ENCODE measurements at regions of chr5 and their contacts with region 1.

Region 1: DNA sequence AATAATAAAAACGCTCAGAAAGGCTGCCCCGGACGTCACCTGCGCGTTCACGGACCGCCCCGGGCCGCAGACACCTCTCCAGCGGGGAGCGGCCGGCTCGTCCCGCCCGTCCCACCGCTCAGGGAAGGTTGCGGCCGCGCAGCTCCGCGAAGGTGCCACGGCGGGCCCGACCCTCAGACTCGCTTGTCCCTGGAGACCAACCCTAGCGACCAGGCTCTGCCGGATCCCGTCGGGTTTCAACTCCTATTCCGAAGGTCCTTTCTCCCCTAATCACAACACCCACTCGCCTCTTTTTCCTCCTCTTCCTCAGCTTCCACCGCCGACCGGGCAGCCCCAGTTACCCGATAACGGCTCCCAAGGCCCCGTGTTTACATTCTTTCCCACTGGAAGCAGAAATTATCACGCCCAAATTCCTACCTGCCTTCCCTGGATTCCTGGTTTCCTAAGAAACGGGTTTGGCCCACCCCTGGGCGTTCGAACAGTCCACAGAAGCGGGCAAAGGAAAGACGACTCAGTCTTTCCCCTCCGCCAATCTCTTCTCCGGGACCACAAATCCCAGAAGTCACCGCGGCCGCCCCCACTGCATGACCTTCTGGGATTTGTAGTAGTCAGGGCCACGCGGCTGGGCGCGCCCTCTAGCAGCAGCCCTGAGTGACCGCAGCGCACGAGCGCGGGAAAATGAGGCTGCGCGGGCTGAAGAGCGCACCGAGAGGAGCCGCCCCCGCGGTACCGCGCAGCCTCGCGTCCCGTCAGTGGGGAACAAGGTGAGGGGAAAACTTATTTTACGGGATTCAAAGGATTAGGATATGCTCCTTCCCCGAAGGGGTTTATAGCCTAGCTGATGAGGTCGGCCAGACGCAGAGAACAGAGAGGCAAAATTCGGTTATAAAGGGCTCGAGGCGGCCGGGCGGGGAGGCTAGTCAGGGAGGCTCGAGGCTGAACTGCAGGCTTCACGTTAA is at the start of gene TTC33:
- DNase-seq: peak; percentile 84 to 95 (median 91)
- ATAC-seq: peak; percentile 95
- H3K4me3 ChIP-seq: peak within 1 kb of the TSS; percentile 95
- H3K4me3 Mint-ChIP-seq: no peak within 1 kb of the TSS
- H3K27ac ChIP-seq: peak within 1 kb of the TSS; percentile 89
- H3K27ac Mint-ChIP-seq: peak within 1 kb of the TSS in 1 of 9 donors; percentile 32
- H3K4me1 ChIP-seq: peaks cover 9 to 11% of the 10 kb centered on the region in 2 donors
- H3K4me1 Mint-ChIP-seq: peaks cover 0 to 34% (median 17%) of the 10 kb centered on the region in 7 donors
- H3K27me3 ChIP-seq: no peaks in the 10 kb centered on the region
- H3K27me3 Mint-ChIP-seq: no peaks in the 10 kb centered on the region
- total RNA-seq, gene TTC33: 7.0 to 17.2 (median 14.0) TPM

Region 2: GRCh38 chr5:39578887-39579497 is 1176.7 kb before region 1 on chr5:
- CTCF ChIA-PET with region 1: no interaction called
- POLR2A ChIA-PET with region 1: no interaction called
- intact Hi-C with region 1: loop called in 1 of 2 experiments (anchors 5 kb)
- DNase-seq: peak in 6 of 9 donors; percentile 2 to 31 (median 18)
- ATAC-seq: no peak
- H3K4me3 ChIP-seq: no peak overlapping the region
- H3K4me3 Mint-ChIP-seq: no peak overlapping the region
- H3K27ac ChIP-seq: no peak overlapping the region
- H3K27ac Mint-ChIP-seq: no peak overlapping the region
- H3K4me1 ChIP-seq: peaks cover 0 to 9% of the 10 kb centered on the region in 2 donors
- H3K4me1 Mint-ChIP-seq: peaks cover 6 to 17% (median 8%) of the 10 kb centered on the region in 7 donors
- H3K27me3 ChIP-seq: no peaks in the 10 kb centered on the region
- H3K27me3 Mint-ChIP-seq: peaks cover 0 to 23% (median 0%) of the 10 kb centered on the region in 5 donors

Region 3: DNA sequence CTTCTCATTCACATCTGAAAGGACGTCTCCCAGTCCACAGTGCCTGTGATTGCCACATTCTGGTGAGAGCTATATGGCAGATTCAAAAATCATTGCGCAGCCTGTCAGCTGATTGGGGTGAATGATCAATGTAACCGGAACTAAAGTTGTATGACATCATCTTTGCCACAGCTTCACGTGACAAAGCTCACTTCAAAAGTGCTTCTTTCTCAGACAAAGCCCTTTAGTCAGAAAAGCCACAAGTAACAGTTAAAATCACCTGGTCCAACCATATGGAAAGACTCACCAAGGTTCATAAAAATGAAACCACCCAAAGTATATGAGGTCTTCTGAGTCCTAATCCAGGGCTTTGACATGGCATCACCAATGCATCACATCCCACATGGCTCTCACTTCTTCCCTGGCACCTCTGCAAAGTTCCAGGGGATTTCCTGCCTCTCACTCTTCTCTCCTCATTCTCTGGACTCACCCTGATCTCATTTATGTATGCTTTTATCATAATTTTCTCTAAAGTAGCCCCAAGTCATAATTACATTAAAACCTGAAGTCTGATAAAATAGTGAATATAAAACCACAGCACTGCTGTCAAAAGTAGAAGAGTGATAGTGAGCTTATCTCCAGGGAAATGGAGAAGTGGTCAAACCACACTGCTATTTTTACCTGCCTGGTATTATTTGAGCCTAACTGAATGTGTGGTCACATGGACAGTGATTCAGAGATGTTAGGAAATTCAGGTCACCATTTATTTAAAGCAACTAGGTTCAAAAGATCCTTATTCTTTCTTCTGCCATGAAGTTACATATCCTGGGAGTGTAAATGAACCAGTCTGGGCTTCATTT is 269.0 kb before region 1 on chr5:
- CTCF ChIA-PET with region 1: no interaction called
- POLR2A ChIA-PET with region 1: no interaction called
- intact Hi-C with region 1: loop called in 1 of 2 experiments (anchors 10 kb)
- DNase-seq: peak in 8 of 9 donors; percentile 31 to 76 (median 56)
- ATAC-seq: peak; percentile 81
- H3K4me3 ChIP-seq: no peak overlapping the region
- H3K4me3 Mint-ChIP-seq: peak overlapping the region in 4 of 10 donors; percentile 2 to 52 (median 48)
- H3K27ac ChIP-seq: no peak overlapping the region
- H3K27ac Mint-ChIP-seq: peak overlapping the region in 8 of 9 donors; percentile 5 to 87 (median 59)
- H3K4me1 ChIP-seq: peaks cover 6 to 12% of the 10 kb centered on the region in 2 donors
- H3K4me1 Mint-ChIP-seq: peaks cover 6 to 69% (median 30%) of the 10 kb centered on the region in 7 donors
- H3K27me3 ChIP-seq: no peaks in the 10 kb centered on the region
- H3K27me3 Mint-ChIP-seq: no peaks in the 10 kb centered on the region

Region 4: GRCh38 chr5:40798012-40798855 is 42.5 kb after region 1 on chr5 and contains the start of gene PRKAA1:
- CTCF ChIA-PET with region 1: interaction called, 3 read pairs
- POLR2A ChIA-PET with region 1: no interaction called
- intact Hi-C with region 1: loop called (anchors 1 kb)
- DNase-seq: peak; percentile 86 to 92 (median 91)
- ATAC-seq: peak; percentile 98
- H3K4me3 ChIP-seq: peak within 1 kb of the TSS; percentile 98
- H3K4me3 Mint-ChIP-seq: peak within 1 kb of the TSS; percentile 86 to 96 (median 94)
- H3K27ac ChIP-seq: peak within 1 kb of the TSS; percentile 91
- H3K27ac Mint-ChIP-seq: peak within 1 kb of the TSS; percentile 74 to 96 (median 94)
- H3K4me1 ChIP-seq: peaks cover 12 to 16% of the 10 kb centered on the region in 2 donors
- H3K4me1 Mint-ChIP-seq: peaks cover 28 to 55% (median 44%) of the 10 kb centered on the region in 7 donors
- H3K27me3 ChIP-seq: no peaks in the 10 kb centered on the region
- H3K27me3 Mint-ChIP-seq: peaks cover 0 to 17% (median 0%) of the 10 kb centered on the region in 5 donors
- total RNA-seq, gene PRKAA1: 65.5 to 103 (median 98.1) TPM

Region 5: GRCh38 chr5:40879163-40879942 is 123.7 kb after region 1 on chr5:
- CTCF ChIA-PET with region 1: no interaction called
- POLR2A ChIA-PET with region 1: no interaction called
- intact Hi-C with region 1: loop called (anchors 1 kb)
- DNase-seq: peak in 5 of 9 donors; percentile 23 to 39 (median 29)
- ATAC-seq: peak; percentile 45
- H3K4me3 ChIP-seq: no peak overlapping the region
- H3K4me3 Mint-ChIP-seq: no peak overlapping the region
- H3K27ac ChIP-seq: no peak overlapping the region
- H3K27ac Mint-ChIP-seq: no peak overlapping the region
- H3K4me1 ChIP-seq: no peaks in the 10 kb centered on the region
- H3K4me1 Mint-ChIP-seq: peaks cover 0 to 5% (median 0%) of the 10 kb centered on the region in 7 donors
- H3K27me3 ChIP-seq: no peaks in the 10 kb centered on the region
- H3K27me3 Mint-ChIP-seq: peaks cover 0 to 9% (median 0%) of the 10 kb centered on the region in 5 donors

Measured in naive thymus-derived CD4-positive, alpha-beta T cell (primary cell).